ENCODE measurements at regions of chr2 and their contacts with region 1.

Region 1: GRCh38 chr2:119311356-119311755 is 55.3 kb downstream of the C2orf76 start:
- DNase-seq: peak; percentile 76
- H3K4me3 ChIP-seq: peak overlapping the region; percentile 62
- H3K27ac ChIP-seq: peak overlapping the region; percentile 95
- H3K4me1 ChIP-seq: peaks cover 52% of the 10 kb centered on the region
- CTCF ChIP-seq: peak; percentile 68

Region 2: DNA sequence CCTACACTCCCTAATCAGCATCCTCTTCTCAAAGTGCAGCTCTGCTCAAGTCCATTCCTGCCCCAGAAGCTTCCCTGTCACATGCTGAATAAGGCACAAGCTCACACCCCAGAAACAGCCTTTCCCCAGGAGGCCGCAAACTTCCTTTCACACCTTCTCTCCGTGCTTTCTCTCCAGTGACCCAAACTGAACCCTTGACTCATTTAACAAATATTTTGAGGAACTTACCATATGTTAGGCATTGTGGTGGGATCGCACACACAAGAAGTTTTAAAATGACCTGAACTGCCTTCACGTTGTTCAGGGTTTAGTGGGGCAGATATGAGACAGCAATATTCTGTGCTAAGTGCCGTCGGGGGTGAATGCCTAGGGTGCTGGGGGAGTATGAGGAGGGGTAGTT is 1061.8 kb before region 1 on chr2:
- CTCF ChIA-PET with region 1: no interaction called
- POLR2A ChIA-PET with region 1: no interaction called
- intact Hi-C with region 1: no loop called
- DNase-seq: no peak
- H3K4me3 ChIP-seq: no peak overlapping the region
- H3K27ac ChIP-seq: no peak overlapping the region
- H3K4me1 ChIP-seq: no peaks in the 10 kb centered on the region
- CTCF ChIP-seq: no peak

Region 3: GRCh38 chr2:118882709-118883210 is 428.6 kb before region 1 on chr2:
- CTCF ChIA-PET with region 1: interaction called, 5 read pairs
- POLR2A ChIA-PET with region 1: interaction called, 3 read pairs
- intact Hi-C with region 1: loop called (anchors 1 kb)
- DNase-seq: peak; percentile 82
- H3K4me3 ChIP-seq: peak overlapping the region; percentile 67
- H3K27ac ChIP-seq: no peak overlapping the region
- H3K4me1 ChIP-seq: peaks cover 9% of the 10 kb centered on the region
- CTCF ChIP-seq: peak; percentile 95

Region 4: DNA sequence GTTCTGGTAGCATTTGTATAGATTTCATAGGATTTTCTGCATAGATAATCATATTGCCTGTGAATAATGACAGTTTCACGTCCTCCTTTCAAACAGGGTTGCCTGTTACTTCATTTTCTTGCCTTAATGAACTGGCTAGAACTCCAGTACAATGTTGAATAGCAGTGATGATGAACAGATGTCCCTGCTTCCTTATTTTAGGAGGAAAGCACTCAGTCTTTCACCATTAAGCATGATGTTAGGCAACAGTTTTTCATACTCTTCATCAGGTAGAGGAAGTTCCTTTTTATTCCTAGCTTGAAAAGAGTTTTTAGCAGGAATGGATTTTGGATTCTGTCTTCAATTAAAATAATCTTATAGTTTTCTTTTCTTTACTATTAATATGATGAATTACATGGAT is 15.6 kb after region 1 on chr2:
- CTCF ChIA-PET with region 1: no interaction called
- POLR2A ChIA-PET with region 1: interaction called, 19 read pairs
- intact Hi-C with region 1: no loop called
- DNase-seq: peak; percentile 18
- H3K4me3 ChIP-seq: no peak overlapping the region
- H3K27ac ChIP-seq: no peak overlapping the region
- H3K4me1 ChIP-seq: no peaks in the 10 kb centered on the region
- CTCF ChIP-seq: no peak

Region 5: GRCh38 chr2:119366649-119367471 is 55.5 kb after region 1 on chr2 and contains the starts of genes C2orf76 and DBI:
- CTCF ChIA-PET with region 1: interaction called, 4 read pairs
- POLR2A ChIA-PET with region 1: interaction called, 22 read pairs
- intact Hi-C with region 1: loop called (anchors 1 kb)
- DNase-seq: peak; percentile 97
- H3K4me3 ChIP-seq: peak within 1 kb of the TSS; percentile 92
- H3K27ac ChIP-seq: peak within 1 kb of the TSS; percentile 77
- H3K4me1 ChIP-seq: peaks cover 39% of the 10 kb centered on the region
- CTCF ChIP-seq: no peak
- total RNA-seq, gene C2orf76: 14.2 and 15.4 TPM in 2 replicates
- total RNA-seq, gene DBI: 293 and 348 TPM in 2 replicates

Region 6: GRCh38 chr2:119476301-119477021 is 165.1 kb after region 1 on chr2:
- CTCF ChIA-PET with region 1: interaction called, 7 read pairs
- POLR2A ChIA-PET with region 1: interaction called, 5 read pairs
- intact Hi-C with region 1: loop called (anchors 1 kb)
- DNase-seq: peak; percentile 68
- H3K4me3 ChIP-seq: no peak overlapping the region
- H3K27ac ChIP-seq: no peak overlapping the region
- H3K4me1 ChIP-seq: peaks cover 3% of the 10 kb centered on the region
- CTCF ChIP-seq: peak; percentile 98